ENCODE measurements at regions of chr10 and their contacts with region 1.

Region 1: GRCh38 chr10:43105102-43105785 is 28.4 kb downstream of the RET start:
- DNase-seq: peak in 4 of 5 donors; percentile 82 to 90 (median 84)
- H3K4me3 ChIP-seq: peak overlapping the region; percentile 20 to 73 (median 56)
- H3K27ac ChIP-seq: no peak overlapping the region
- H3K4me1 ChIP-seq: peaks cover 0 to 7% (median 0%) of the 10 kb centered on the region in 3 donors
- H3K27me3 ChIP-seq: peaks cover 2% of the 10 kb centered on the region
- CTCF ChIP-seq: peak; percentile 99

Region 2: GRCh38 chr10:42866115-42866995 is 238.9 kb before region 1 on chr10:
- intact Hi-C with region 1: loop called (anchors 5 kb)
- DNase-seq: peak; percentile 82 to 93 (median 87)
- H3K4me3 ChIP-seq: peak overlapping the region in 2 of 3 donors; percentile 39 to 45
- H3K27ac ChIP-seq: no peak overlapping the region
- H3K4me1 ChIP-seq: peaks cover 0 to 5% (median 0%) of the 10 kb centered on the region in 3 donors
- H3K27me3 ChIP-seq: peaks cover 13% of the 10 kb centered on the region
- CTCF ChIP-seq: peak; percentile 75

Region 3: GRCh38 chr10:42898037-42898960 is 206.9 kb before region 1 on chr10:
- intact Hi-C with region 1: no loop called
- DNase-seq: peak in 3 of 5 donors; percentile 20 to 61 (median 27)
- H3K4me3 ChIP-seq: no peak overlapping the region
- H3K27ac ChIP-seq: no peak overlapping the region
- H3K4me1 ChIP-seq: no peaks in the 10 kb centered on the region
- H3K27me3 ChIP-seq: peaks cover 14% of the 10 kb centered on the region
- CTCF ChIP-seq: no peak